ENCODE measurements at regions of chr15 and their contacts with region 1.

Region 1: GRCh38 chr15:58227706-58228543 is 89.7 kb downstream of the AQP9 start:
- DNase-seq: peak; percentile 79
- H3K4me3 ChIP-seq: no peak overlapping the region
- H3K27ac ChIP-seq: no peak overlapping the region
- H3K4me1 ChIP-seq: peaks cover 2% of the 10 kb centered on the region
- H3K27me3 ChIP-seq: peaks cover 13 to 18% of the 10 kb centered on the region in 2 experiments
- CTCF ChIP-seq: peak; percentile 69 to 76
- POLR2A ChIP-seq: no peak

Region 2: DNA sequence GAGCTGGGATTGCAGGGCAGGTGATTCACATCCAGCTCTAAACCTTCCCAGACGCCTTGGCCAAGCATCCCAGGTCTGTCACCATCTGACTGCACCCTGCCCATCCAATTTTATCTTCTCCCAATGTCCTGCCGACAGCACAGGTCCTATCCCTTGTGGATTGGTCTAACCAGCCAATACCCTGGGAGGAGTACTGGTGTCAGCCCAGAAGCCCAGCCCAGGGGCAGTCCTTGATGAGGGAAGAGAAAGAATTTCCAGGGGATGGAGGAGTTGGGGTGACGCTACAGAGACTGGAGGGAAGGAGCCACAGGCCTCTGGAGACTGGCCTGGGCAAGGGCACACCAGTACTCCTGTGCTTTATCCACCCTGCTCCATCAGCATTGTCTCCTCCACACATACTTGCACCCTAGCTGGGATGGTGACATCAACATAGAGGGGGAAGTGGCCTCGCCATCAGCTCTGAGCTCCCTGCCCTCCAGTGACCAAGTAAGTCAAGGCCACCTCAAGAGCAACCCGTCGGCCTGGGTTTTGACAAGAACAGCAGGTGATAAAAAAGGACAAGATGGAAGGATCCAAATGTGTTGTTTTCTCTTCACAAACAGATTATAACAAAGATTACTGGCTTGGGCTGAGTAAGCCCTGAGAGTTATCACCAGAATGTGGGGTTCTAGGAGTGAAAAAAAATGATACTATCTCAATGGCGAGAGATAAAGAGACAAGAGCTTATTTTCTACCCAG is 24.8 kb after region 1 on chr15:
- CTCF ChIA-PET with region 1: interaction called, 10 read pairs
- POLR2A ChIA-PET with region 1: no interaction called
- dilution Hi-C with region 1: no loop called
- intact Hi-C with region 1: no loop called
- DNase-seq: no peak
- H3K4me3 ChIP-seq: no peak overlapping the region
- H3K27ac ChIP-seq: no peak overlapping the region
- H3K4me1 ChIP-seq: no peaks in the 10 kb centered on the region
- H3K27me3 ChIP-seq: peaks cover 23 to 35% of the 10 kb centered on the region in 2 experiments
- CTCF ChIP-seq: no peak
- POLR2A ChIP-seq: no peak

Region 3: DNA sequence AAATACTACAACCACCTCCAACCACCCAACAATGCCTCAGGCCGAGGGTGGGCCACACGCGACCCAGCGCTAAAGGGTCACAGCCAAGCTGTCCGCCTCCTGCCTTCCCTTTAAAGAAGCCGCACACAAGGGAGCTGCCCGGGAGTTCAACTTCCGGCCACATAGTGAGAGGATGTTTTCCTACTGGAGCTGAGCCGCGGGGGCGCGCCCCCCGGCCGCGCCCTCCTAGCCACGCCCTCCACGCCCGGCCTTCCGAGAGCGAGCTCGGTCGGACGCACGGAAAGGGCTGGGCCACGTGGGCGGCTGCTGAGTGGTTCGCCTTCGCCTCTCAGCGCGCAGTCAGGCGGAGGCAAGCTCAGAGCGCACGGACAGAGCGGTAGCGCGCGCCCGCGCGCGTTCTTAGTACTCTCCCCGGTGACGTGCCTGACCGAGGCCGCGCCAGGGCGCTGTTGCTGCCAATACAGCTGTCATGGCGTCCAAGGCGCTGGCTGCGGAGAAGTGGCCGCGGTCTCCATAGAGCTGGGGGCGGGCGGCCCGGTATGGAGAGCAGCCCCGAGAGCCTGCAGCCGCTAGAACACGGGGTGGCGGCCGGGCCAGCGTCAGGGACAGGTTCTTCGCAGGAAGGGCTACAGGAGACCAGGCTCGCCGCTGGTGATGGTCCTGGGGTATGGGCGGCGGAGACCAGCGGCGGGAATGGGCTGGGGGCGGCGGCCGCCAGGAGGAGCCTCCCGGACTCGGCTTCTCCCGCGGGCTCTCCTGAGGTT is 543.1 kb after region 1 on chr15 and contains the start of gene MINDY2:
- CTCF ChIA-PET with region 1: interaction called, 18 read pairs
- POLR2A ChIA-PET with region 1: no interaction called
- dilution Hi-C with region 1: no loop called
- intact Hi-C with region 1: loop called (anchors 5 kb)
- DNase-seq: peak; percentile 99
- H3K4me3 ChIP-seq: peak within 1 kb of the TSS; percentile 62 to 82 (median 65)
- H3K27ac ChIP-seq: peak within 1 kb of the TSS; percentile 81
- H3K4me1 ChIP-seq: peaks cover 23% of the 10 kb centered on the region
- H3K27me3 ChIP-seq: no peaks in the 10 kb centered on the region
- CTCF ChIP-seq: peak; percentile 12 to 44
- POLR2A ChIP-seq: peak; percentile 71
- total RNA-seq, gene MINDY2: 11.4 and 13.7 TPM in 2 replicates

Region 4: GRCh38 chr15:58951388-58952007 is 723.6 kb after region 1 on chr15:
- CTCF ChIA-PET with region 1: interaction called, 10 read pairs
- POLR2A ChIA-PET with region 1: no interaction called
- dilution Hi-C with region 1: no loop called
- intact Hi-C with region 1: no loop called
- DNase-seq: peak; percentile 85
- H3K4me3 ChIP-seq: no peak overlapping the region
- H3K27ac ChIP-seq: no peak overlapping the region
- H3K4me1 ChIP-seq: peaks cover 14% of the 10 kb centered on the region
- H3K27me3 ChIP-seq: no peaks in the 10 kb centered on the region
- CTCF ChIP-seq: no peak
- POLR2A ChIP-seq: no peak

Region 5: GRCh38 chr15:59138243-59138642 is 910.3 kb after region 1 on chr15:
- CTCF ChIA-PET with region 1: interaction called, 3 read pairs
- POLR2A ChIA-PET with region 1: no interaction called
- dilution Hi-C with region 1: no loop called
- intact Hi-C with region 1: loop called (anchors 5 kb)
- DNase-seq: peak; percentile 64
- H3K4me3 ChIP-seq: no peak overlapping the region
- H3K27ac ChIP-seq: no peak overlapping the region
- H3K4me1 ChIP-seq: no peaks in the 10 kb centered on the region
- H3K27me3 ChIP-seq: no peaks in the 10 kb centered on the region
- CTCF ChIP-seq: peak; percentile 86 to 91
- POLR2A ChIP-seq: no peak

Region 6: DNA sequence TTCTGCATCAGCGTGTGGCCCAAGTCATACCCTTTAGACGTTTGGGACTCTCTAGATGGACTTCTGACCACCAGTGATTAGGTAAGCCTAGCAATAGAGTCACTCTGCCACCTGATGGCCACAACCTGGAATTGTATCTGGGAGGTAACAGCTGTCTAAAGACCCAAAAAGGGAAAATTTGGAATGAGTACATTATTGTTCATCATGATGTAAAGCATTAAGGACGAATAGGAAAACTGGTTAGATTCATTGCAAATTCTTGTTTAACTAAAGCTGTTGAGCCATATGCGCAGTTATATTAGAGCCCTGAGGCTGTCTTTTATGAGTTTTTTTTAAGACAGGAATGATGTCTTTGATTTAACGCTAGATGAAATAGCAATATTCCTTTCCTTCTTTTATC is 1273.7 kb after region 1 on chr15:
- CTCF ChIA-PET with region 1: interaction called, 39 read pairs
- POLR2A ChIA-PET with region 1: no interaction called
- dilution Hi-C with region 1: no loop called
- intact Hi-C with region 1: no loop called
- DNase-seq: peak; percentile 72
- H3K4me3 ChIP-seq: no peak overlapping the region
- H3K27ac ChIP-seq: no peak overlapping the region
- H3K4me1 ChIP-seq: no peaks in the 10 kb centered on the region
- H3K27me3 ChIP-seq: peaks cover 4 to 6% of the 10 kb centered on the region in 2 experiments
- CTCF ChIP-seq: peak; percentile 54 to 66
- POLR2A ChIP-seq: no peak